ENCODE measurements at regions of chr12 and their contacts with region 1.

Region 1: GRCh38 chr12:76348079-76348901 is at the start of gene BBS10:
- DNase-seq: peak; percentile 85 to 97 (median 94)

Region 2: DNA sequence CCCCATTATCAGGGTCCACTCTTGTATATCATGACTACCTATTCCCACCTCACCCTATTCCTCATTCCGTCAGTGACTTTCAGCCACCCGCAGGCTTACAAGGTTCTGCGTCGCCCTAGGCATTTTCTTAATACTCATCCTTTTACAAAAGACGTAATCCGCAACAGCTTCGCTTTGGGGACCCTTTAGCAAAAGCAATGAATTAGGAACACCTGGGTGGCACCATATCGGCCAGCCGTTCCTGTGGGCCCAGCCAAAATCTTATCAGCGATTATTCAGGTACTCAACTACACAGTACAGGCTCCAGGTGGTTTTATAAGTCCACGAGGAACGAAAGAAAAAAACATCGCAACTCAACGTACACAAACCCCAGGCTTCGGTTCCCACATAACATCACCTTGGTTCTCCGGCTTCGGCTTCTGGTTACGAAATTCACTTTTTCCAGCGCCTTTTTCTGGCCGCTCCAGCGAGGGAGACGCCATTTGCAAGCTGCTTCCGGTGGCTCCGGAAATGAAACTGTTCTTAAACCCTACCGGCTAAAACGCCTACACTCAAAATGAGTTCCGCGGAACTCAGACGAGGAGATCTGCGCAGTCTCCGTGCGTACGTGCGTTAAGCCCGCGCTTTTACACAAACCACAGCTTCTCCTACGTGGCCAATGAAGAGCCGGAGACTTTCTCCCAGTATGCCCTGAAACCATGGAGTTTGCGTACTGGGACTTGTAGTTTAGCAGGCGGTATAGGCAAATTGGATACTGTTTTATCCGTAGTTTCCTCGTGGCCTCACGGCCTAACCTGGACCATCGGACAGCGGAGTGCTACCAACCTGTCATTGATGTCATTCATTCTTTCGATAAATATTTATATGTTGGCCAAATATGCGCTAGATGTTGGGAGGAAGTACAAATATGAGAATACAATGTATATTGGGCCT is 836.9 kb before region 1 on chr12 and contains the start of gene KRR1:
- intact Hi-C with region 1: loop called (anchors 5 kb)
- DNase-seq: peak; percentile 90 to 98 (median 96)

Region 3: GRCh38 chr12:76031537-76032073 is 316.7 kb before region 1 on chr12 and contains the start of gene PHLDA1:
- intact Hi-C with region 1: loop called (anchors 10 kb)
- DNase-seq: peak; percentile 79 to 98 (median 94)

Region 4: DNA sequence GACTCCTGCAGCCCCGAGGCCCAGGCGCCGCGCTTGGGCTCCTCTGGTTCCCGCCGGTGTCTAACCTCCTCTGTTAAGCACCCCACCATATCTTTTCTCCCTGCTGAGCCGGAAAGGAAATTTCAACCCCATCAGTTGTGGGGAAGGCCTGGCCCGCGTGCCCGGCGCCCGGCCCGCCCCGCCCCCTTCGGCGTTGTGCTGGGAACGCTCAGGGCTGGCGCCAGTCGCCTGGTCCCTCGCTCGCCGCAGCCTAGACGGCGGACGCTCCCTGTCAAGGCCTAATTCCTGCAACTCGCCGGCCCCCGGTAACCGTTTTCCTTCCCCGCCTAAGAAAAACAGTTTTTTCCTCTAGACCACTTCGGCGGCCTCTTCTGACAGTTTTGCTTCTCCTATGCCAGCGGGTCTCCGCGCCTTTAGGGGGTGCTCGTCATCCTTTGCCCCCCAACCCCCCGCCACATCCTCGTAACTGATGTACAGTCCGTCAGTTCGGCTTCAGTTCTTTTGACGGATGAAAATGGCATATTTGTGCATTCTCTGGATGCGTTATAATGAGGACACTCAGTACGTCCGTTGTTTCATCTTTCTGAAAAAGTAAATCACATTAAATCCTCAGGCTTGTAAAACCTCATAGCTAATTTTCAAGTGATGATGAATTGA is 263.3 kb before region 1 on chr12:
- intact Hi-C with region 1: loop called (anchors 5 kb)
- DNase-seq: peak in 17 of 42 donors; percentile 47 to 89 (median 80)

Region 5: DNA sequence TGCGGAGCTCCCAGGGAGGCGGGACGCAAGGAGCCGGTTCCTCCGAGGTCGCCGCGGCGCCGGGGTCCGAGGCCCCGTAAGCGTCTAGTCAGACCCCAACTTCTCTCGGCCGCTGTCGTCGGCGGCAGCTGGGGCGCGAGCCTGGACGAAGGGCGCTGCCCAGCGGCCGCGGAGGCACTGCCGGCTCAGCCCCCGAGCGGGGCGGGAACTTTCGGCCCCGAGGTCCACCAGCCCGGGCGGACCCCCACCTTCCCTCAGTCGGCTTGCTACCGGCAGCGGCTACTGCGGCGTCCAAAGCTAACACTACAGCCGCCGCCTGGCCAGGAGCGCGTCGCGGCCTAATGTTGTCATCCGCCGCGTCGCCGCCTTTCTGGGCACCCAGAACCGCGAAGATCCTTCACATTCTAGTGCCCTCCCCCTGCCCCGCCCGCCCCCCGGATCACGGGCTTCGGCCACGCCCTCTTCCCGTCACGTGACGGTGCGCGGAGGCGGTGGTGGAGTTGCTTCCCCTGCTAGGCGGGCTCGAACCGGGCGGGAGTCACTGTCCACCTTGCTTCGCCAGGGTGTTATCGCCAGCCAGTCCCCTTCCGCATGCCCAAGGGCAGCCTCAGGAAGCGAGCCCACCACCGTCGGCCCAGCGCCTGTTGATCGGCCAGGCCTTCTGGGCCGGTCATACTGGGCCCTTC is 211.3 kb after region 1 on chr12 and contains the start of gene OSBPL8:
- intact Hi-C with region 1: loop called (anchors 5 kb)
- DNase-seq: peak; percentile 91 to 99 (median 97)

Measured in head of caudate nucleus (tissue), 42 donors.